SK-N-SH (cell line): ENCODE measurements at regions of chr4 and their contacts with region 1.

Region 1: GRCh38 chr4:155371432-155372043 is 5.2 kb downstream of the MAP9 start:
- DNase-seq: peak; percentile 35
- H3K4me3 ChIP-seq: no peak overlapping the region
- H3K27ac ChIP-seq: no peak overlapping the region
- H3K4me1 ChIP-seq: peaks cover 3 to 4% of the 10 kb centered on the region in 2 experiments; a peak in 2 of 4 replicates
- H3K27me3 ChIP-seq: no peaks in the 10 kb centered on the region
- CTCF ChIP-seq: peak; percentile 76
- EP300 ChIP-seq: no peak
- RAD21 ChIP-seq: peak; percentile 65

Region 2: GRCh38 chr4:154854362-154854761 is 517.2 kb before region 1 on chr4:
- CTCF ChIA-PET with region 1: interaction called, 11 read pairs
- POLR2A ChIA-PET with region 1: no interaction called
- DNase-seq: peak; percentile 26
- H3K4me3 ChIP-seq: no peak overlapping the region
- H3K27ac ChIP-seq: no peak overlapping the region
- H3K4me1 ChIP-seq: no peaks in the 10 kb centered on the region
- H3K27me3 ChIP-seq: no peaks in the 10 kb centered on the region
- CTCF ChIP-seq: peak; percentile 42
- EP300 ChIP-seq: no peak
- RAD21 ChIP-seq: peak; percentile 73

Region 3: DNA sequence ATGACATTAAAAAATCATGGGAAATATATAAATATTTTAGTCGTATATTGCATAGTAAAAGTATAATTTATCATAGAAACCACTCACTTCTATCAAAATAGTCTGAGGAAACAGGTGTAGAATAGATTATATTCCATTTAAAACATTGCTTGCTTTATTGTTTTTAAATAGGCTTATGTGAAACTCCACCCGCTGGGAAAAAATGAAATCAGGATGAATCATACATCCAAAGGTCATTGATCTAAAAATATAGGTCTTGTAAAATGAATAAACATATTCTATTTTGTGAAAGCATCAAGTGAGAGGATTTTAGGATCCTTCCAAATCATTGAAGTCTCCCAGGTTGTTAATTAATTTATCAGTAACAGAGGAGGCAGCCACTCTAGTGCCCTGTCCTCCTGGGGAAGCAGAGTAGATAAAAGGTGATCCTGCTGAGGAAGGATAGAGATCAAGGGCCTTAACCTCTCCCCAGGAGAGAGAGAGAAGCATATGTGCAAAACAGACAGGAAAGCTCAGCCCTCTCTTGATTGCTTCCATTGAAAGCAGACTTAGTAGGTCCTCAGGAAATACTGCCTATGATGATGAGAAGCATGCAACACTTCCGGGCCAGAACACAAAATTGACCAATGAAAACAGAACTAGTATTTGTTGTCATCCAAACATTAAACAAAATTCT is 102.0 kb after region 1 on chr4:
- CTCF ChIA-PET with region 1: no interaction called
- POLR2A ChIA-PET with region 1: no interaction called
- DNase-seq: no peak
- H3K4me3 ChIP-seq: no peak overlapping the region
- H3K27ac ChIP-seq: no peak overlapping the region
- H3K4me1 ChIP-seq: no peaks in the 10 kb centered on the region
- H3K27me3 ChIP-seq: no peaks in the 10 kb centered on the region
- CTCF ChIP-seq: no peak
- EP300 ChIP-seq: no peak
- RAD21 ChIP-seq: no peak